ENCODE measurements at regions of chr5 and their contacts with region 1.

Region 1: GRCh38 chr5:68239487-68239886 is 23.9 kb downstream of the PIK3R1 start:
- DNase-seq: peak; percentile 33
- H3K4me3 ChIP-seq: no peak overlapping the region
- CTCF ChIP-seq: no peak

Region 2: GRCh38 chr5:67493676-67494075 is 745.8 kb before region 1 on chr5:
- in situ Hi-C with region 1: loop called (anchors 25 kb)
- DNase-seq: no peak
- H3K4me3 ChIP-seq: no peak overlapping the region
- CTCF ChIP-seq: no peak

Measured in astrocyte of the cerebellum (primary cell).